K562 (cell line): ENCODE measurements at regions of chr12 and their contacts with region 1.

Region 1: GRCh38 chr12:112439769-112440168 is 21.0 kb downstream of the PTPN11 start:
- DNase-seq: no peak
- ATAC-seq: no peak
- H3K4me3 ChIP-seq: no peak overlapping the region
- H3K27ac ChIP-seq: no peak overlapping the region
- H3K4me1 ChIP-seq: 0 out of 5 replicates have a peak, but pooled peaks cover 0 to 4% of the 10 kb centered on the region in 2 experiments
- H3K27me3 ChIP-seq: no peaks in the 10 kb centered on the region
- CTCF ChIP-seq: no peak
- EP300 ChIP-seq: no peak
- POLR2A ChIP-seq: no peak
- RAD21 ChIP-seq: no peak

Region 2: GRCh38 chr12:111812881-111813741 is 626.7 kb before region 1 on chr12:
- CTCF ChIA-PET with region 1: no interaction called
- POLR2A ChIA-PET with region 1: no interaction called
- in situ Hi-C with region 1: no loop called
- intact Hi-C with region 1: no loop called
- DNase-seq: peak; percentile 84 to 89 (median 84)
- ATAC-seq: peak; percentile 97
- H3K4me3 ChIP-seq: no peak overlapping the region
- H3K27ac ChIP-seq: no peak overlapping the region
- H3K4me1 ChIP-seq: no peaks in the 10 kb centered on the region; a peak in 2 of 5 replicates
- H3K27me3 ChIP-seq: peaks cover 0 to 4% of the 10 kb centered on the region in 2 experiments; a peak in 1 of 5 replicates
- CTCF ChIP-seq: peak; percentile 88 to 96 (median 93)
- EP300 ChIP-seq: no peak
- POLR2A ChIP-seq: no peak
- RAD21 ChIP-seq: peak; percentile 87 to 96

Region 3: GRCh38 chr12:112450725-112451124 is 11.0 kb after region 1 on chr12:
- CTCF ChIA-PET with region 1: no interaction called
- POLR2A ChIA-PET with region 1: interaction called, 10 read pairs
- in situ Hi-C with region 1: no loop called
- intact Hi-C with region 1: no loop called
- DNase-seq: no peak
- ATAC-seq: no peak
- H3K4me3 ChIP-seq: no peak overlapping the region
- H3K27ac ChIP-seq: no peak overlapping the region
- H3K4me1 ChIP-seq: peaks cover 2 to 8% of the 10 kb centered on the region in 2 experiments; a peak in 3 of 5 replicates
- H3K27me3 ChIP-seq: no peaks in the 10 kb centered on the region
- CTCF ChIP-seq: 0 out of 6 replicates have a peak, but pooled peaks of 1 of the 3 experiments have one; percentile 11
- EP300 ChIP-seq: no peak
- POLR2A ChIP-seq: no peak
- RAD21 ChIP-seq: 0 out of 4 replicates have a peak, but pooled peaks of 1 of the 2 experiments have one; percentile 13

Region 4: GRCh38 chr12:112524676-112525505 is 85.1 kb after region 1 on chr12:
- CTCF ChIA-PET with region 1: no interaction called
- POLR2A ChIA-PET with region 1: no interaction called
- in situ Hi-C with region 1: no loop called
- intact Hi-C with region 1: no loop called
- DNase-seq: no peak
- ATAC-seq: 0 out of 3 replicates have a peak, but pooled peaks have one; percentile 38
- H3K4me3 ChIP-seq: no peak overlapping the region
- H3K27ac ChIP-seq: no peak overlapping the region
- H3K4me1 ChIP-seq: peaks cover 0 to 4% of the 10 kb centered on the region in 2 experiments; a peak in 1 of 5 replicates
- H3K27me3 ChIP-seq: peaks cover 12 to 27% of the 10 kb centered on the region in 2 experiments; a peak in 4 of 5 replicates
- CTCF ChIP-seq: 0 out of 6 replicates have a peak, but pooled peaks of 1 of the 3 experiments have one; percentile 16
- EP300 ChIP-seq: no peak
- POLR2A ChIP-seq: no peak
- RAD21 ChIP-seq: no peak

Region 5: GRCh38 chr12:112577473-112578329 is 137.9 kb after region 1 on chr12:
- CTCF ChIA-PET with region 1: no interaction called
- POLR2A ChIA-PET with region 1: no interaction called
- in situ Hi-C with region 1: no loop called
- intact Hi-C with region 1: no loop called
- DNase-seq: no peak
- ATAC-seq: no peak
- H3K4me3 ChIP-seq: no peak overlapping the region
- H3K27ac ChIP-seq: no peak overlapping the region
- H3K4me1 ChIP-seq: no peaks in the 10 kb centered on the region; a peak in 1 of 5 replicates
- H3K27me3 ChIP-seq: peaks cover 5 to 8% of the 10 kb centered on the region in 2 experiments; a peak in 4 of 5 replicates
- CTCF ChIP-seq: no peak
- EP300 ChIP-seq: no peak
- POLR2A ChIP-seq: no peak
- RAD21 ChIP-seq: no peak